ENCODE measurements at regions of chr7 and their contacts with region 1.

Region 1: GRCh38 chr7:80918909-80919662 is at the start of gene SEMA3C:
- DNase-seq: peak; percentile 78
- ATAC-seq: peak; percentile 95
- H3K4me3 ChIP-seq: peak within 1 kb of the TSS; percentile 54 to 68
- H3K27ac ChIP-seq: peak within 1 kb of the TSS; percentile 60
- H3K4me1 ChIP-seq: peaks cover 26 to 44% of the 10 kb centered on the region in 2 experiments; a peak in 3 of 4 replicates
- H3K27me3 ChIP-seq: no peaks in the 10 kb centered on the region
- CTCF ChIP-seq: no peak
- POLR2A ChIP-seq: peak; percentile 82
- RAD21 ChIP-seq: peak; percentile 47
- total RNA-seq, gene SEMA3C: 25.3 TPM

Region 2: DNA sequence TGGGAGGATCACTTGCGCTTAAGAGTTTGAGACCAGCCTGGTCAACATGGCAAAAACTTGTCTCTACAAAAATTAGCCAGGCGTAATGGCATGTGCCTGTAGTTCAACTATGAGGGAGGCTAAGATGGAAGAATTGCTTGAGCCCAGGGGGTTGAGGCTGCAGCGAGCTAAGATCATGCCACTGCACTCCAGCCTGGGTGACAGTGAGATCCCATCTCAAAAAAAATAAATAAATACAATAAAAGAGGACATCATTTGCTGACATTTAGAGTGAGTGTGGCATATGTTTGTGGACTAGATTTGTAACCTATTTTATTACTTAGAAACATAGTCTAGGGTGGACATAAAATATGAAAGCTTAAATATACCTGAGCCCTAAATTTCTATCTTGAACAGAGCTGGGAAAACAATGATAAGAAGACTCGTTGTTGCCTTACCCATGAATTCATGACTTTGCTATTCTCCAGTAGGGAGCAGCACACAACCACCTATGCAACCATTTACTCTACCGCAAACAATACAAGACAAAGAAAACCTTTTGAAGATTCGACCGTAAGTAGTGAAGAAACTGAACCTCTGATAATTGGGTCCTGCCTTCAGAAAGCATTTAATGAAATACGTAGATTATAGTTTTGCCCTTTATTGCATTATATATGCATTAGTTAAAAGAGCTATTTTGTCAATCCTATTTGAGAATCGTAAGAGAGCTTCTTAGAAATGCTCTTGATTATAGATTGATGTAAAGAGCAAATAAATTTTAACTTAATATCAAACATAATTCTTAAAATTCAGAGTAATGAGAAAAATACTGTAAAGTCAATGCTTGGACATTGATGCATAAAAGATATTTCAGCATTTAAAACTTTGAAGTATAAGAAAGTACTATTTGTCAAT is 490.7 kb before region 1 on chr7:
- CTCF ChIA-PET with region 1: no interaction called
- POLR2A ChIA-PET with region 1: no interaction called
- RAD21 ChIA-PET with region 1: no interaction called
- intact Hi-C with region 1: loop called (anchors 5 kb)
- DNase-seq: peak; percentile 54
- ATAC-seq: peak; percentile 90
- H3K4me3 ChIP-seq: no peak overlapping the region
- H3K27ac ChIP-seq: no peak overlapping the region
- H3K4me1 ChIP-seq: peaks cover 0 to 7% of the 10 kb centered on the region in 2 experiments; a peak in 1 of 4 replicates
- H3K27me3 ChIP-seq: no peaks in the 10 kb centered on the region
- CTCF ChIP-seq: peak; percentile 58 to 73 (median 68)
- POLR2A ChIP-seq: no peak
- RAD21 ChIP-seq: peak; percentile 90

Region 3: DNA sequence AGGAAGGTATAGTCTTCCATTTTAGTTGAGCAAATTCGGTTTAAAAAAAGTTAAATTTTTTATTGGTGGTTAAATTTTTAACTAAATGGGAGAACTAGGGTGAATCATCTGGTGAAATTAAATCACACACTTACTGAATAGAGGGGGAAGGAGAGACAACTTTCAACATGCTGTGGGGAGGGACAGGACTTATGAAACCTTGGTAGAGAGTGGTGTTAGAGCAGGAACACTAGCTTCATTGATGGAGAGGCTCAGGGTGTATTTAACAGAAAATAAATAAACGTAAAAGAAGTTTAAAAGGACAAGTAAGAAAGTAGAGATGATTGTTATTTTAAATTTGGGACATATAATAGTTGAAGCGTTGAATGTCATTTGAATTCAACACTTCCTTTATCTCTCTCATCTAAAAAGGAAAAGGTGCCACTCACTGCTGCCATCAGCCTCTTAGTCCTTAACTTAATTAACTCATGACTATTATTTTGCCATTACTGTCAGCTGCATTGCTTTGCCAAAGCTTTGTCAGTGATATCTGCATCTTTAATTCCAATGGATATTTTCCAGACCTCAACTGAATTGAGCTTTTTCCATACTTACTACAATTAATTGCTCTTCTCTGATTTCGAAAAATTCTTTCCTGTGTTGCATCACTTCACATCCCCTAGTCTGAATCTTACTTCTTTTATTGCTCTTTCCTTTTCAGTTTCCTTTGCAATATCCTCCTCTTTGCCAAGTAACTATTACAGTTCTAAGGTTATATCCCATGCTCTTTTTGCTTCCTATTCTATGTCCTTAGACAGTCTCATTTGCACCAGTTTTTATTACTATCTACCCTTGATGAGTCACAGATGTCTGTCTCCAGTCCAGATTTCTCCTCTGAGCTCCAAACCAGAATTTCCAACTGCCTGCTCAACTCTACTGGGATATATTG is 478.9 kb before region 1 on chr7:
- CTCF ChIA-PET with region 1: no interaction called
- POLR2A ChIA-PET with region 1: no interaction called
- RAD21 ChIA-PET with region 1: no interaction called
- intact Hi-C with region 1: no loop called
- DNase-seq: no peak
- ATAC-seq: no peak
- H3K4me3 ChIP-seq: no peak overlapping the region
- H3K27ac ChIP-seq: no peak overlapping the region
- H3K4me1 ChIP-seq: peaks cover 2 to 10% of the 10 kb centered on the region in 2 experiments; a peak in 2 of 4 replicates
- H3K27me3 ChIP-seq: no peaks in the 10 kb centered on the region
- CTCF ChIP-seq: no peak
- POLR2A ChIP-seq: no peak
- RAD21 ChIP-seq: no peak

Region 4: GRCh38 chr7:80833289-80834268 is 85.5 kb before region 1 on chr7:
- CTCF ChIA-PET with region 1: no interaction called
- POLR2A ChIA-PET with region 1: no interaction called
- RAD21 ChIA-PET with region 1: no interaction called
- intact Hi-C with region 1: loop called (anchors 5 kb)
- DNase-seq: no peak
- ATAC-seq: no peak
- H3K4me3 ChIP-seq: no peak overlapping the region
- H3K27ac ChIP-seq: no peak overlapping the region
- H3K4me1 ChIP-seq: peaks cover 26 to 44% of the 10 kb centered on the region in 2 experiments
- H3K27me3 ChIP-seq: no peaks in the 10 kb centered on the region
- CTCF ChIP-seq: no peak
- POLR2A ChIP-seq: no peak
- RAD21 ChIP-seq: no peak

Region 5: DNA sequence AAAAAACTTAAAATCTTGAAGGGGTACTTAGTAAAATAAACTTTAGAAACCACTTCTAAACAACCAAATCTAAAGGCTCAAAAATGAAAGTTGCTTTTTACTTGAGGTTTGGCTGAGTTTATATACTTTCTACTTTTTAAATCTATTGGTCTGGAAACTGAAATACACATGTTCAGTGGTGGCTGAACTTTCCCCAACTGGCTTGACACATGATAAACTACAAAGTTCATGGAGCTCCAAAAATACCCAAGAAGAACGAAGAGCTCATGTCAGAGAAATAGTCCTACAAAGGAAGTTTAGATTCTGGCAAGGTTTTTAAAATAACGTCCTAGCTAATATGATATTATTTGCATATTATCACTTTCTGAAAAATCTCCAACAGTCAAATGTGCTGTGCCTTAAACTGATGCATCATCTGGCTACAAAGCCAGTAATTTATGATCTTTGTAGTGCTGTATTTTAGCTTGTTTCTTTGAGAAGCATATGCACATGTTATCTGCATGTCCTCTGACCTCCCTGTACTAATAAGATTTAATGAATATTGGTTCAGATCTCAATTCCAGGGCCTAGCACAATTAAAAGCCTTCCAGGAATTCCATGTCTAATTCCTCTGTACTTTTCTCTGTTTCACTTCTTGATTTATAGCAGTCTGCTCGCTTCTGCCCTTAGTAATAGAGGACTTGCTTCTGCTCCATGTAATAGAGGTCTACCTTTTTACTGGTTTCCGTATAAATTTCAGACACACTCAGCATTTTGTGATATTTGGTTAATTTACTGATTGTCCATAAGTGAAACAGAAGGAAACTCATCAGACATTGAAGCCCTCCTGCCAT is 28.4 kb before region 1 on chr7:
- CTCF ChIA-PET with region 1: no interaction called
- POLR2A ChIA-PET with region 1: no interaction called
- RAD21 ChIA-PET with region 1: no interaction called
- intact Hi-C with region 1: no loop called
- DNase-seq: no peak
- ATAC-seq: no peak
- H3K4me3 ChIP-seq: no peak overlapping the region
- H3K27ac ChIP-seq: no peak overlapping the region
- H3K4me1 ChIP-seq: peaks cover 11 to 14% of the 10 kb centered on the region in 2 experiments
- H3K27me3 ChIP-seq: no peaks in the 10 kb centered on the region
- CTCF ChIP-seq: no peak
- POLR2A ChIP-seq: no peak
- RAD21 ChIP-seq: no peak

Region 6: DNA sequence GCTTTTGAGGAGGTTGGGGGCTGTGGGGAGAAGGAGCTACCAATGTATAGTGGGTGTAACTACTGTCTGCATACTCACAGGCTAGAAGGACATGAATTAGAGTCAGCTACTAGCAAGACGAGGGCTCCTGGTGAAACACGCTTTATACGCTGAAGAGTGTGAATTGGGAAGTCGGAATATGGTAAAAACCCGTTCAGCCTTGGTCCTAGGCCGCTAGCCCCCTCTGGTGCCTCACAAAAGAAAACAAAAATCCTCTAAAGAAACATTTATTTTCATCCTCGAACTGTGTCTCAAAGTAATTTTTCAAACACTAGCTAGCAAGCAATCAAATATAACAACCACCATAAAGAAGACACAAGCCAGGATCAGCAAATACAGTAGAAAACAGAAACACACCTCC is 337.9 kb after region 1 on chr7:
- CTCF ChIA-PET with region 1: interaction called, 3 read pairs
- POLR2A ChIA-PET with region 1: no interaction called
- RAD21 ChIA-PET with region 1: no interaction called
- intact Hi-C with region 1: loop called (anchors 5 kb)
- DNase-seq: no peak
- ATAC-seq: no peak
- H3K4me3 ChIP-seq: no peak overlapping the region
- H3K27ac ChIP-seq: no peak overlapping the region
- H3K4me1 ChIP-seq: no peaks in the 10 kb centered on the region
- H3K27me3 ChIP-seq: no peaks in the 10 kb centered on the region
- CTCF ChIP-seq: peak in 2 of 3 experiments; percentile 2 to 17; a peak in 2 of 6 replicates
- POLR2A ChIP-seq: no peak
- RAD21 ChIP-seq: peak; percentile 49

Region 7: DNA sequence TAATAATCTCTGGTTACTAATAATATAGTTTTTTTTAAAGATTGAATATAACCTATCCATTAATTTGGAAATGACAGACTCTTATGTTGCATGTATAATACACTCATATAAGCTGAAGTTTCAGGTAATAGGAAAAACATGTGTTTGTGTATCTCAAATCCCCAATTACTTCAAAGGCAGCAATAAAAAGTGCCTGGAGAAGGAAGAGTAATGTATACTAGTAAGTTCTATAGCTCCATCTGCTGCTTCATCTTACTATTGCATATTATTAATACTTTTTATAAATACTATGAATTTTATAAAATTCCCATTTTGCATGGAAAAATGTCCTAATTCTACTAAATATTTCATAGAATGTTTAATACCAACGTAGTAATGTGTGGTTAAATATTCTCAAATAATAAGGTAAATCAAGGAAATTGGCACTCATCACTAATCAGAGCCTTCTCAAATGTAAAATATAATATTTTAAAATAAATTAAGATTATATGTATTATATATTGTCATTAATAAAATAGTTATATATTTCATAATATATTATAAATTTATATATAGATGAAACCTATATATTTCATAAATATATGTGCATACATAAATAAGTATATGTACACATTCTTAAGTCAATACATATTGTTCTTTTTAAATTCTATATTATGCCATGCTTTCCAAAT is 538.9 kb after region 1 on chr7:
- CTCF ChIA-PET with region 1: interaction called, 12 read pairs
- POLR2A ChIA-PET with region 1: no interaction called
- RAD21 ChIA-PET with region 1: interaction called in 1 of 2 experiments, 5 read pairs
- intact Hi-C with region 1: no loop called
- DNase-seq: peak; percentile 13
- ATAC-seq: no peak
- H3K4me3 ChIP-seq: no peak overlapping the region
- H3K27ac ChIP-seq: no peak overlapping the region
- H3K4me1 ChIP-seq: no peaks in the 10 kb centered on the region
- H3K27me3 ChIP-seq: no peaks in the 10 kb centered on the region
- CTCF ChIP-seq: peak in 2 of 3 experiments; percentile 24 to 49; a peak in 4 of 6 replicates
- POLR2A ChIP-seq: no peak
- RAD21 ChIP-seq: peak; percentile 71